ENCODE measurements at regions of chr4 and their contacts with region 1.

Region 1: GRCh38 chr4:15805583-15806517 is 27.7 kb downstream of the CD38 start:
- DNase-seq: no peak

Region 2: DNA sequence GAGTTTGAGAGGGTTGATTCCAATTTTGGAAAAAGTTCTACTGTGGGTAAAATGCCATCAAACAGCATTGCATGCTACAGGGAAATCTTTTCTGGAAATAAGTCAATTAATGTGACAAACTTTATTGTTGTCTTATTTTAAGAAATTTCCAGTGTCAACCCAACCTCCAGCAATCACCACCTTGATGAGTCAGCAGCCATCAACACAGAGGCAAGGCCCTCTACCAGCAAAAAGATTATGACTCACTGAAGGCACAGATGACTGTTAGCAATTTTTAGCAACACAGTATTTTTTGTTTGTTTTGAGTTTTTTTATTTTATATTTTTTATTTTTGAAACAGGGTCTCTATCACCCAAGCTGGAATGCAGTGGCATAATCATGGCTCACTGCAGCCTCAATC is 543.5 kb before region 1 on chr4:
- intact Hi-C with region 1: no loop called
- DNase-seq: no peak

Region 3: GRCh38 chr4:15479089-15479912 is 326.5 kb before region 1 on chr4:
- intact Hi-C with region 1: loop called (anchors 10 kb)
- DNase-seq: no peak

Region 4: DNA sequence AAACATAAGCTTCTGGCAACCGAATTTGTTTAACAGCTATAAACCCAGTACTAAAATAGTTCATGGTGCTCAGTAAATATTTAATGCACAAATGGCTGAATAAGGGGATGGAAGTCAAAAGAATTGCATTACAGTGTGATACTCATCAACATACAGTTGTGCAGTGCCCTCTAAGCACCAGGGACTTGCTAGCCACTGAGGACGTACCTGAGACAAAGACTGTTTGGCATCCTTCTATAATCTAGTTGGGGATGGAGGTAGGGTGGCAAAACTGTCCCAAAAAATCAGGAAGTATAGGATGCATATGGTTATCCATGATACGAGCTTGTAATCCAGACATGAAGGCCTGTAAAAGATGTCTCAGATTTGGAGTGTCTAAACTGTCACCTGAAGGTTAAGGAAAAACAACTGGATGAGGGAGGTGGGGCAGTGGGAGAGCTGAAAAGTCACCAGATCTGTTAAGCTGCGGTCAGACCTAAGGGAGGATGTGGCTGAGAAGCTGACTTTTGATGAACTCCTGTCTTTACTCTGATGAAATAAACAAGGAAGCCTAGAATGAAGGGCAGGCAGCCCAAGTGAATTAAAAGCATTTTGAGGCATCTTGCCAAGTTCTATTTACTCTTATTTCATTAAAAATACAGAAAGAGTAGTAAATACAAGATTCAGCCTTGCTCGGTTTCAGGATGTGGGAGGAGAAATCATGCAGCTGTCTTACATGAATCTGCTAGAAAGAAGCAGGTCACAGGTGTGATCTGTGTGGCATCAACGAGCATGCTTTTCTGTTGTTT is 39.7 kb before region 1 on chr4:
- intact Hi-C with region 1: no loop called
- DNase-seq: no peak

Region 5: GRCh38 chr4:15882675-15883086 is 76.8 kb after region 1 on chr4:
- intact Hi-C with region 1: loop called (anchors 2 kb)
- DNase-seq: peak; percentile 79

Region 6: GRCh38 chr4:15956179-15956850 is 150.5 kb after region 1 on chr4:
- intact Hi-C with region 1: loop called (anchors 2 kb)
- DNase-seq: peak; percentile 84

Region 7: DNA sequence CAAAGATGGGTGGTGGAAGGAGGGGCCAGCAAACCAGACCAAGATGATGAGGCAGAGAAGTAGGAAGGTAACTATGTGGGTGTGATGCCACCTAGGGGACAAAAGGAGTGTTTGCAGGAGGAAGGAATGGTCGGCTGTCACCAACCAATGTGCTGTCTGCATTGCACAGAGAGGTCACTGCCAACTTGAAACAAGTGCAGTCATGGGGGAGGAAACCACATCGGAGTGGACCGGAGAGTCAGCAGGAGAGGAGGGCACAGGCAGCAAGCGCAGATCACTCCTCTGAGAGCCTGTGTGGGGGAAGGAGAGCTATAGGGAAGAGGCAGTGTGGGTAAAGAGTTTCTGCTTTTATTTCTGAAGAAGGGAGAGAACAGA is 195.6 kb after region 1 on chr4:
- intact Hi-C with region 1: loop called (anchors 5 kb)
- DNase-seq: no peak

Region 8: DNA sequence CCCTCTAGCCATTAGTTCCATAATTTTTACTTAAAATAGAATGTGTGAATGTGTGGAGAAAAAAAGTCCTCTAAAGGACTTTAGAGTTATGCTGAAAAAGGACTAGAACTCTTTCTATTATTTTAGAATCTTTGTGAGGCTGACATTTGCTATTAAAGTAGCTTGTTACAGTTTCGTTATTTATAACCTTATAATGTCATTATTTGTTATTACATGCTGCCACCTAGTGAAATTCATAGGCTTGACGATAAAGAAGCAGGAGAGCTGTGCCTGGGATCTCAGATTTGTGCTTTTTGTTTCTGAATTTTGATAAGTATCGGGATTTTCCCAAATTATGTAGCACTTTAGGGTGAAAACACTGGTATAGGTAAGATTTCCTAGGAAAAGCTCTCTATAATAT is 458.9 kb after region 1 on chr4:
- intact Hi-C with region 1: loop called (anchors 10 kb)
- DNase-seq: no peak